MCF 10A (cell line): ENCODE measurements at regions of chr10 and their contacts with region 1.

Region 1: GRCh38 chr10:114486938-114487814 is 82.9 kb upstream of the AFAP1L2 start:
- DNase-seq: peak; percentile 37
- H3K4me3 Mint-ChIP-seq: no peak overlapping the region
- H3K27ac Mint-ChIP-seq: no peak overlapping the region
- H3K4me1 Mint-ChIP-seq: peaks cover 16% of the 10 kb centered on the region
- H3K27me3 Mint-ChIP-seq: no peaks in the 10 kb centered on the region
- CTCF ChIP-seq: no peak

Region 2: GRCh38 chr10:114279898-114280644 is 207.1 kb before region 1 on chr10:
- CTCF ChIA-PET with region 1: no interaction called
- POLR2A ChIA-PET with region 1: no interaction called
- intact Hi-C with region 1: no loop called
- DNase-seq: no peak
- H3K4me3 Mint-ChIP-seq: no peak overlapping the region
- H3K27ac Mint-ChIP-seq: no peak overlapping the region
- H3K4me1 Mint-ChIP-seq: no peaks in the 10 kb centered on the region
- H3K27me3 Mint-ChIP-seq: no peaks in the 10 kb centered on the region
- CTCF ChIP-seq: no peak

Region 3: DNA sequence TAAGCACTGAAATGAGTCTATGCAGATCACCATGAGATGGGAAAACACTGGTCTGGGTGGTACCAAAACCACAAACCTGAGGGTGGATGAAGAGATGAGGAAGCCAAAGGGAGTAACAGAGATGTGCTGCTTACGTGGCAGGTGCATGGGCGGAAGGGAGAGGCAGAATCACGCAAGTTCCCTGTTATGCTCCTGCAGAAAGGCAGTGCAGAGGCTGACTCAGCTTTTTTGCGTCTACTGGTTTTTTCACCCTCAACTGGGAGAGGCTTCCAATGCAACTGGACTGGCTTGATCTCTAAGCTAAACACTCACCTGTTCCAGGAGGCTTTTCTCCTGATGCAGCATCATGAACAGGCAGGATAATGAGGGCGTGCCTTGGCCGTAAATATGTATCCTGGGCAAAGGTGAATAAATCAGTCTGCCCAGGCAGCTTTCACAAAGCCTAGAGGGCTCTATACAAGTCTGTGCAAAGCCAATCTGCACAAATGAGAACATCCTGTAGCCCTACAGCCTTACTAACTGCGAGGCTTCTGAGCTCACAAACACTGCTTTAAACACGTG is 12.5 kb after region 1 on chr10:
- CTCF ChIA-PET with region 1: interaction called, 12 read pairs
- POLR2A ChIA-PET with region 1: interaction called, 19 read pairs
- intact Hi-C with region 1: no loop called
- DNase-seq: peak; percentile 74
- H3K4me3 Mint-ChIP-seq: no peak overlapping the region
- H3K27ac Mint-ChIP-seq: no peak overlapping the region
- H3K4me1 Mint-ChIP-seq: peaks cover 25% of the 10 kb centered on the region
- H3K27me3 Mint-ChIP-seq: no peaks in the 10 kb centered on the region
- CTCF ChIP-seq: no peak